ENCODE measurements at regions of chr17 and their contacts with region 1.

Region 1: GRCh38 chr17:43033948-43034881 is 9.2 kb downstream of the RND2 start:
- DNase-seq: no peak

Region 2: GRCh38 chr17:42779936-42780850 is 254.0 kb before region 1 on chr17 and contains the start of gene WNK4:
- in situ Hi-C with region 1: no loop called
- DNase-seq: no peak
- total RNA-seq, gene WNK4: not detected in 2 replicates

Region 3: GRCh38 chr17:42964161-42964932 is 69.9 kb before region 1 on chr17 and contains the start of gene AARSD1:
- in situ Hi-C with region 1: no loop called
- DNase-seq: peak; percentile 93
- total RNA-seq, gene AARSD1: 15.3 and 42.3 TPM in 2 replicates

Region 4: DNA sequence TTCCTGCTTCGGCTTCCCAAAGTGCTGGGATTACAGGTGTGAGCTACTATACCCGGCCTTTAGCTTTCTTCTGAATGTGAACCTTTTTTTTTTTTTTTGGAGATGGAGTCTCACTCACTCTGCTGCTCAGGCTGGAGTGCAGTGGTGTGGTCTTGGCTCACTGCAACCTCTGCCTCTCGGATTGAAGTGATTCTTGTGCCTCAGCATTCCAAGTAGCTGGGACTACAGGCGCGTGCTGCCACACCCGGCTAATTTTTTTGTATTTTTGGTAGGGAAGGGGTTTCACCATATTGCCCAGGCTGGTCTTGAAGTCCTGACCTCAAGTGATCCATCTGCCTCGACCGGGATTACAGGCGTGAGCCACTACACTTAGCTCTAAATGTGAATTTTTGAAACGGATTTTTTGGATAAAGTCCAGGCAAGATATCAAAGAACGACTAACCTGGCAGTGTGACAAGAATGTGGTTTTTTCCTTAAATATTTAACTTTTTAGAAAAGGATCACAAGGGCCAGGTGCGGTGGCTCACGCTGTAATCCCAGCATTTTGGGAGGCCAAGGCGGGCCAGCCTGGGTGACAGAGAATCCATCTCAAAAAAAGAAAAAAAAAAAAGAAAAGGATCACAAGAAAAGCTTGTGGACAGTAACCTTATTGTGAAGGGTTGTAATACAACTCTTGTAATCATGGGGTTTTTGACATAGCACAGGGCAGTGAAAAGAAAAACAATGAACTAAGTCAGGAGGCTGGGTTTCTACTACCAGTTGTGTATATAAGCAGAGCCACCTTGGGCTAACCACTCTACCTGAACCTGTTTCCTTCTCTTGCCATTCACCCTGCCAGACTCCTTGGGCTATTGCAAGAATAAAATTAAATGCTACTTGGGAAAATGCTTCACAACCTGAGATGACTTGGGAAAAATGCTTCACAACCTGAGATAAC is 84.7 kb after region 1 on chr17:
- in situ Hi-C with region 1: loop called (anchors 5 kb)
- DNase-seq: no peak